PC-3 (cell line): ENCODE measurements at regions of chr5 and their contacts with region 1.

Region 1: DNA sequence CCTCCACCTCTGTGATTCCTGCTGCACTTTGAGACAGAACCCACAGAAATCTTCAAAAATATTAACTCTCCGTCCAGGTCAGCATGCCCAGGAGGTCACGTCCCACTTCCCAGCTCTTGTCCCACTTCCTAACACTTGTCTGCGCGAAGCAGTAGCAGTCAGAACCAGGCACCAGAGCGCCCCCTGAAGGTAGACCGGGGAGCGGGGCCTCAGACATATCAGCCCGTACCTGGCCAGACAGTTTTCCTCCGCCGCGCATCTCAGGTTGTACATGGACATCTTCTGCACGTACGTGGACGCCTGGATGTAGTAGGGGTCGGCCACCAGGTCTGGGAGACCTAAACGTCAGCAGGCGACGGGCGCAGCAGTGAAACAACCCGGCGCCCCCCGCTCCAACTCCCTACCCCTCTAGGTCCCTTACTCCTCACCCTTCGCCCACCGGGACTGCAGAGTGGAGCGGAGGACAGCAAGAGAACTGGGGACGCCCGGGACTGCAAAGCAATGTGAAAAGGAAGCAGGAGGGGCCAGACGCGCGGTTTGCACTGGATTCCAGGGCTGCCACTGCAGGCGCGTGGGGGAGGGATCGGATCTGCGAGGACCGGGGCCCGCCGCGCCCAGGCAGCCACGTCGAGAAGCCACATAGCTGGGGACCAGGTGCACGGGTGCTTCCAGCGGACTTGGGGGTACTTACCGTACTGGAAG is 1.2 kb downstream of the LOX start:
- DNase-seq: peak; percentile 62
- ATAC-seq: peak; percentile 61
- H3K4me3 ChIP-seq: peak overlapping the region; percentile 76
- H3K27ac ChIP-seq: no peak overlapping the region
- H3K4me1 ChIP-seq: peaks cover 10% of the 10 kb centered on the region; the same call in 1 of the 2 replicates
- H3K27me3 ChIP-seq: no peaks in the 10 kb centered on the region
- CTCF ChIP-seq: peak; percentile 72

Region 2: DNA sequence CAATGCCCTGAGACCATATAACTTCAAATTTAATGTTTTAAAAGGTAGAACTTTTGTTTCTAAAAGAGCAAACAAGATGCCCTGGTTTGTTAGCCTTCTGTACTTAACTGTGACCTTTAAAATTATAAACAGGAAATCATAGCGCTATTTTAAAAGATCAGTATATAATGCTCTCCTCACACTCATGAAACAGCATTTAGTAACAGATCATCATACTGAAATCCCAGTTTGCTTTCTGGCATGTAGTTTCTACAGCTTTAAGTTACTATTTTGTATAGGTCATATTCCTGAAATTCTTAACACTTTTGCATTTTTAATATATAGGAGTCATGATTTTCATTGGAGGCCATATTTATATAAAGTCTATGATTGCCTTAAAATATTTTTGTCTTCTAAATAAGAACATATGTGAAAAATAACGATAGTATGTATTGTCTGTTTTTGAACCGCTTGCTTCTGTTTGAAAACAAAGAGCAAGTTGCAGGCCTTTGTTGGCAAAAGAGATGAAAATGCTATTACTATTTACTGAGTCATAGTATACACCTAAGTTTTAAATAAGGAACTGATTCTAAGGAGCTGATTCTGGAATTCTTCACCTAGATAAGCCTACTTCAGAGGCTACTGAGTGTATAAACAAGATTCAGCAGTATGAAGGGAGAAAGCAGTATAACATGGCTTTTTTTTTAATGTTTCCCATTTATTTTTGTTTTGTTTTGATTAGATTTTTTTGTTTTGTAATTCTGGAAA is 94.5 kb before region 1 on chr5:
- CTCF ChIA-PET with region 1: no interaction called
- POLR2A ChIA-PET with region 1: no interaction called
- intact Hi-C with region 1: loop called (anchors 1 kb)
- DNase-seq: peak; percentile 60
- ATAC-seq: peak; percentile 88
- H3K4me3 ChIP-seq: no peak overlapping the region
- H3K27ac ChIP-seq: 0 out of 2 replicates have a peak overlapping the region, but pooled peaks have one; percentile 8
- H3K4me1 ChIP-seq: peaks cover 17% of the 10 kb centered on the region
- H3K27me3 ChIP-seq: no peaks in the 10 kb centered on the region
- CTCF ChIP-seq: no peak

Region 3: DNA sequence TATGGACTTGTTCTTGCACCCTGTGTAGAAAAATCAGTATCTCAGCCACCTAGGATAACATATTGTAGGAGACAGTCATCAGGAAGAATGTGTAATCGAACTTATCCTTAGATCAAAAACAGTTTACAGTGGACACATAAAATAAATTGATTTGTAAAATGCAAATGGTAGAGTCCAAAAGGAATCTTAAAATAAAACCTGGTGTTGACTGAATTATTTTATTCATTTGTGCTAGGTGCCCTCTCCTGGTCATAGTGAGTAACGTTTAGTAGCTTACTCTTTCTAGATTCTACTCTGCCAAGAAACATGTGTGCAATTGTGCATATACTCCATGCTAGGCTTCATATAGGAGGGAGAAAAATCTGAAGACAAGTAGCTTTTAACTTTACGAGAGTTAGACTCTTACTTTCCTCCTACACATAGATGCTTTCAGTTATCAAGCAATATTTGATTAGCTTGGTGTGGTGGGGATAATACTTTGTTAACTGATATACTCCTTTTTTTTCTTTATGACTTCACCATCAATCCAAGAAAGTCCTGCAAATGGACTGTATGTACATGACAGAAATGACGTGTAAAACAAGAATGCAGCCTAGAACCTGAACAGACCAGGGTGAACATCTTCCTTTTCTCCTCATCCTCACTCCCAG is 24.9 kb after region 1 on chr5:
- CTCF ChIA-PET with region 1: no interaction called
- POLR2A ChIA-PET with region 1: no interaction called
- intact Hi-C with region 1: loop called (anchors 2 kb)
- DNase-seq: peak; percentile 53
- ATAC-seq: peak; percentile 49; the same call in 1 of the 2 replicates
- H3K4me3 ChIP-seq: no peak overlapping the region
- H3K27ac ChIP-seq: no peak overlapping the region
- H3K4me1 ChIP-seq: peaks cover 8% of the 10 kb centered on the region
- H3K27me3 ChIP-seq: no peaks in the 10 kb centered on the region
- CTCF ChIP-seq: peak; percentile 66; the same call in 1 of the 2 replicates

Region 4: DNA sequence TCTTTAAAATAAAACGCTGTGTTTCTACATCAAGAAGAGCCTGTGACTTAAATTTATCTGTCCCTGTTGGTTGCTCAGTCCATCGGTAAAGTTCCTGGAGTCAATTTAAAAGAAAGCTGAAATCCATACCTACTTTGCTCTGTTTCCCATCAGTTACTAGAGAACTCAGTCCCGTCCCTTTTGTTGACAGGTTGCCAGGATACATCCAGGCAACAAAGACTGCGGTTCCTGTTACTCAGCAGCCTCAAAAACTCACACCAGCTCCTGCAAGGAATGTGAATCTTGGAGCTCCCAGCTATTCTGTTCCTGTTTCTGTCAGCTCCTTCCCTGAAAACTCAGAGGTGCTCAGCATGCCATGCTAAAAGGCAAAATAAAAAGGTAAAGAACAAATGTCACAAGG is 52.5 kb after region 1 on chr5 and contains the start of gene ZNF474:
- CTCF ChIA-PET with region 1: no interaction called
- POLR2A ChIA-PET with region 1: no interaction called
- intact Hi-C with region 1: no loop called
- DNase-seq: peak; percentile 79
- ATAC-seq: peak; percentile 75
- H3K4me3 ChIP-seq: no peak within 1 kb of the TSS
- H3K27ac ChIP-seq: peak within 1 kb of the TSS; percentile 37
- H3K4me1 ChIP-seq: peaks cover 4% of the 10 kb centered on the region
- H3K27me3 ChIP-seq: no peaks in the 10 kb centered on the region
- CTCF ChIP-seq: no peak
- total RNA-seq, gene ZNF474: 0.36 TPM in 1 of 2 replicates, not detected in the other